HepG2 (cell line): ENCODE measurements at regions of chr2 and their contacts with region 1.

Region 1: GRCh38 chr2:30447149-30448045 is at the start of gene LCLAT1:
- DNase-seq: peak; percentile 59
- ATAC-seq: peak; percentile 91
- H3K4me3 ChIP-seq: peak within 1 kb of the TSS; percentile 71 to 93 (median 83)
- H3K27ac ChIP-seq: peak within 1 kb of the TSS; percentile 65
- H3K4me1 ChIP-seq: peaks cover 54% of the 10 kb centered on the region
- H3K27me3 ChIP-seq: no peaks in the 10 kb centered on the region; a peak in 1 of 5 replicates
- CTCF ChIP-seq: peak; percentile 44
- EP300 ChIP-seq: no peak
- POLR2A ChIP-seq: peak; percentile 53 to 73
- RAD21 ChIP-seq: no peak; the same call in none of the 2 replicates
- total RNA-seq, gene LCLAT1: 25.3 and 28.0 TPM in 2 replicates

Region 2: DNA sequence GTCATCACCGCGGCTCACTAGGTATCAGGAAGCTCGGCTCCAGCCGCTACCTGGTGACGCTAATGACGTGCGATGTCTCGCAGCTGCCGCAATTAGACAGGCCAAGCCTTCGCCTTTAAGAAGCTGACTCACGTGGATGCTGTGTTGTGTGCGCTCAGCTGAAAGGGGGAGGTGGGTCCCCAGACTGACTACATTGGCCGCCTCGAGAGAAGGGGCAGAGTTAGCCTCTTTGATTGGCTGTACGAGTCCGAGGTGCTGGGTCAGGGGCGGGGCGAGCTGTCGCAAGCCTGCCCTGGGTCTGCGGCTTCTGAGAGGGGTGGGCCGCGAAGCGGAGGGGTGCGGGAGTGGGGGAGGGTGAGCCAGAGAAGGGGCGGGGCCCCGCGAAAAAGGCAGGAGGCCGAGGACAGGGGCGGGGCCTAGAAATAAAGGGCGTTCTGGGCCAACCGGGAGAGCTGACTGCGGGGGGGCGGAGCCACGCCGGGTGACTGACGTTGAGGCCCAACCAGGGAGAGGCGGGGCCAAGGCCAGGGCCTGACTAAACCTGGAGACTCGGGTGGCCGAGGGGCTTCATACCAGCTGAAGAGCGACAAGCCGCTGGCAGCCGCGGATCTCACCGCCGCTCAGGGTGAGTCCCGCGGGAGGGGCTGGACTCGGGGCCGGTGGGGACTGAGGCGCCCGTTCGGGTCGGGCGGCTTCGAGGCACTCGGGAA is 300.8 kb before region 1 on chr2 and contains the start of gene YPEL5:
- CTCF ChIA-PET with region 1: no interaction called
- POLR2A ChIA-PET with region 1: interaction called, 3 read pairs
- in situ Hi-C with region 1: no loop called
- intact Hi-C with region 1: loop called (anchors 5 kb)
- DNase-seq: peak; percentile 98
- ATAC-seq: peak; percentile 98
- H3K4me3 ChIP-seq: peak within 1 kb of the TSS; percentile 85 to 96 (median 93)
- H3K27ac ChIP-seq: peak within 1 kb of the TSS; percentile 89
- H3K4me1 ChIP-seq: peaks cover 44% of the 10 kb centered on the region
- H3K27me3 ChIP-seq: peaks cover 2 to 4% of the 10 kb centered on the region in 2 experiments; a peak in 1 of 5 replicates
- CTCF ChIP-seq: no peak
- EP300 ChIP-seq: peak in 1 of 2 experiments; percentile 38; a peak in 2 of 4 replicates
- POLR2A ChIP-seq: peak; percentile 74 to 85
- RAD21 ChIP-seq: no peak
- total RNA-seq, gene YPEL5: 12.7 and 20.8 TPM in 2 replicates

Region 3: DNA sequence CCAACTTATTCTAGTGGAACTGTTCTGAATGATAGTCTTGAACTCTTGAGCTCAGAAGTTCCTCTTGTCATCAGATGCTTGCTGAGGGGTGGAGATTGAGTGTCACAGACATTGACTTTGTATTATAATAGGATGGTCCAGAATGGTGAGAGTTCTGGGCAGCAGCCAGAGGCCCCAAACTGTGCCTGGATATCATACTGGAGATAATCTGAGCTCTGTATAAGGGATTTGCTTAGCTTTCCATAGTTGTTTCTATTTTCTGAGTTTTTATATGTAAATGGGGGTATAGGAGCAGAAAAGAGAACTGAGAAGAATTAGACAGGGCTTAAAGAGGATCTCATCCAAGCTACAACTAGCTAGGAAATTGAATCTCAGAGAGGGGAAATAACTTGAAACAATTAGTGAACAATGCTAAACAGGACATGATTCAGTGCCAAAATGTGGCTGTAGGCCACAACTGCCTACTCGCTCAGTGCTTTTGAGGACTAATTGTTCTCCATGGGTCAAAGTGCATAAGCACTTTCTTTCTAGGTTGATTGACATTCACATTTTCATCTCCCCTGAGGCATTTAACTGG is 10.4 kb before region 1 on chr2:
- CTCF ChIA-PET with region 1: no interaction called
- POLR2A ChIA-PET with region 1: no interaction called
- in situ Hi-C with region 1: no loop called
- intact Hi-C with region 1: no loop called
- DNase-seq: no peak
- ATAC-seq: no peak
- H3K4me3 ChIP-seq: no peak overlapping the region
- H3K27ac ChIP-seq: no peak overlapping the region
- H3K4me1 ChIP-seq: peaks cover 23% of the 10 kb centered on the region
- H3K27me3 ChIP-seq: no peaks in the 10 kb centered on the region
- CTCF ChIP-seq: no peak
- EP300 ChIP-seq: no peak
- POLR2A ChIP-seq: no peak
- RAD21 ChIP-seq: no peak

Region 4: GRCh38 chr2:30492185-30492584 is 44.8 kb after region 1 on chr2:
- CTCF ChIA-PET with region 1: no interaction called
- POLR2A ChIA-PET with region 1: no interaction called
- in situ Hi-C with region 1: no loop called
- intact Hi-C with region 1: no loop called
- DNase-seq: no peak
- ATAC-seq: no peak
- H3K4me3 ChIP-seq: no peak overlapping the region
- H3K27ac ChIP-seq: no peak overlapping the region
- H3K4me1 ChIP-seq: peaks cover 5% of the 10 kb centered on the region; the same call in 1 of the 2 replicates
- H3K27me3 ChIP-seq: no peaks in the 10 kb centered on the region
- CTCF ChIP-seq: no peak
- EP300 ChIP-seq: no peak
- POLR2A ChIP-seq: no peak
- RAD21 ChIP-seq: no peak

Region 5: GRCh38 chr2:30504731-30505130 is 57.3 kb after region 1 on chr2:
- CTCF ChIA-PET with region 1: no interaction called
- POLR2A ChIA-PET with region 1: no interaction called
- in situ Hi-C with region 1: loop called (anchors 5 kb)
- intact Hi-C with region 1: no loop called
- DNase-seq: no peak
- ATAC-seq: no peak
- H3K4me3 ChIP-seq: no peak overlapping the region
- H3K27ac ChIP-seq: no peak overlapping the region
- H3K4me1 ChIP-seq: peaks cover 29% of the 10 kb centered on the region
- H3K27me3 ChIP-seq: no peaks in the 10 kb centered on the region
- CTCF ChIP-seq: no peak
- EP300 ChIP-seq: no peak
- POLR2A ChIP-seq: no peak
- RAD21 ChIP-seq: no peak